ENCODE measurements at regions of chr7 and their contacts with region 1.

Region 1: GRCh38 chr7:50416527-50417182 is 33.5 kb downstream of the FIGNL1 start:
- DNase-seq: no peak
- H3K4me3 ChIP-seq: no peak overlapping the region
- H3K27ac ChIP-seq: no peak overlapping the region
- H3K4me1 ChIP-seq: no peaks in the 10 kb centered on the region
- H3K27me3 ChIP-seq: no peaks in the 10 kb centered on the region
- CTCF ChIP-seq: no peak
- POLR2A ChIP-seq: no peak

Region 2: GRCh38 chr7:49333180-49333881 is 1083.3 kb before region 1 on chr7:
- intact Hi-C with region 1: no loop called
- DNase-seq: no peak
- H3K4me3 ChIP-seq: no peak overlapping the region
- H3K27ac ChIP-seq: no peak overlapping the region
- H3K4me1 ChIP-seq: no peaks in the 10 kb centered on the region
- H3K27me3 ChIP-seq: no peaks in the 10 kb centered on the region
- CTCF ChIP-seq: no peak
- POLR2A ChIP-seq: no peak

Region 3: GRCh38 chr7:50397320-50397970 is 19.2 kb before region 1 on chr7:
- intact Hi-C with region 1: loop called (anchors 2 kb)
- DNase-seq: no peak
- H3K4me3 ChIP-seq: no peak overlapping the region
- H3K27ac ChIP-seq: no peak overlapping the region
- H3K4me1 ChIP-seq: no peaks in the 10 kb centered on the region
- H3K27me3 ChIP-seq: peaks cover 0 to 33% of the 10 kb centered on the region in 2 donors
- CTCF ChIP-seq: no peak
- POLR2A ChIP-seq: no peak

Region 4: GRCh38 chr7:50620433-50620832 is 203.8 kb after region 1 on chr7:
- intact Hi-C with region 1: no loop called
- DNase-seq: no peak
- H3K4me3 ChIP-seq: no peak overlapping the region
- H3K27ac ChIP-seq: no peak overlapping the region
- H3K4me1 ChIP-seq: no peaks in the 10 kb centered on the region
- H3K27me3 ChIP-seq: no peaks in the 10 kb centered on the region
- CTCF ChIP-seq: no peak
- POLR2A ChIP-seq: no peak

Measured in breast epithelium (tissue), 4 donors.